PC-3 (cell line): ENCODE measurements at regions of chr11 and their contacts with region 1.

Region 1: GRCh38 chr11:66835768-66836405 is 7.4 kb upstream of the RCE1 start:
- DNase-seq: no peak
- ATAC-seq: no peak
- H3K4me3 ChIP-seq: no peak overlapping the region
- H3K27ac ChIP-seq: no peak overlapping the region
- H3K4me1 ChIP-seq: peaks cover 10% of the 10 kb centered on the region
- H3K27me3 ChIP-seq: no peaks in the 10 kb centered on the region
- CTCF ChIP-seq: no peak

Region 2: DNA sequence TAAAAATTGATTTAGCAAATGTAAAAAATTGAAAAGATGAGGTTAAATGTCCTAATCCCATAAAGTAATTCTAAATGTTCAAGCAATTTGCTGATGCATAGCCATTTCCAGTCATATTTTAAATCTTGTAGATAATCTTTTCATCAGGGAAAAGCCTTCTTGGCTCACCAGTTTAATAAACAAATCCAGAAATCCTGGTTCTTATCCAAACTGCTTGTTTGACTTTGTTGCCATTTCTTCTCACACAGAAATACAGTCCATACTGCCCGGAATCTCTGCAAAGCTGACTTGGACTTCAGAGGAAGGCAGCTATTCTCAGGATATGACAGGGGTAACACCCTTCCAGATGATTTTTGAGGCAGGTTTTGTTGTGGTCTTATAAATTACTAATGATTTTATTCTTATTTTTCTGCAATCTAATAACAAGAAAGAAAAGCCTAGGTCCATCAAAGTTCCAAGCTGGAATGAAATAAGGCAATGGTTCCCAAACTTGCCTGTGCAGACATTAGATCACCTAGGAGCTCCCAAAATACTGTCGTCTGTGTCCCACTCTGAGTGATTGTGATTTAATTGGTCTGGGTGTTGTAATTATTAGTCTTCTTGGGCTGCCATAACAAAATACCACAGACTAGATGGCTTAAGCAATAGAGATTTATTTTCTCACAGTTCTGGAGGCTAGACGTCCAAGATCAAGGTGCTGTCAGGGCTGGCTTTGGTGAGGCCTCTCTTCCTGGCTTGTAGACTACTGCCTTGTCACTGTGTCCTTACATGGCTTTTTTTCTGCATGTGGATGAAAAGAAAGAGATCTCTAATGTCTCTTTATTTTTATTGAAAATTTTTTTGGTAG is 47.8 kb before region 1 on chr11:
- CTCF ChIA-PET with region 1: no interaction called
- POLR2A ChIA-PET with region 1: no interaction called
- intact Hi-C with region 1: loop called (anchors 5 kb)
- DNase-seq: peak; percentile 14
- ATAC-seq: no peak
- H3K4me3 ChIP-seq: no peak overlapping the region
- H3K27ac ChIP-seq: peak overlapping the region; percentile 74
- H3K4me1 ChIP-seq: peaks cover 38% of the 10 kb centered on the region
- H3K27me3 ChIP-seq: no peaks in the 10 kb centered on the region
- CTCF ChIP-seq: no peak

Region 3: GRCh38 chr11:66815646-66816045 is 20.2 kb before region 1 on chr11:
- CTCF ChIA-PET with region 1: interaction called, 5 read pairs
- POLR2A ChIA-PET with region 1: no interaction called
- intact Hi-C with region 1: loop called (anchors 2 kb)
- DNase-seq: peak; percentile 93
- ATAC-seq: peak; percentile 91
- H3K4me3 ChIP-seq: peak overlapping the region; percentile 40; the same call in 1 of the 2 replicates
- H3K27ac ChIP-seq: peak overlapping the region; percentile 87
- H3K4me1 ChIP-seq: peaks cover 35% of the 10 kb centered on the region
- H3K27me3 ChIP-seq: no peaks in the 10 kb centered on the region
- CTCF ChIP-seq: no peak

Region 4: GRCh38 chr11:66894141-66894540 is 58.3 kb after region 1 on chr11:
- CTCF ChIA-PET with region 1: no interaction called
- POLR2A ChIA-PET with region 1: no interaction called
- intact Hi-C with region 1: no loop called
- DNase-seq: no peak
- ATAC-seq: no peak
- H3K4me3 ChIP-seq: no peak overlapping the region
- H3K27ac ChIP-seq: no peak overlapping the region
- H3K4me1 ChIP-seq: peaks cover 18% of the 10 kb centered on the region
- H3K27me3 ChIP-seq: no peaks in the 10 kb centered on the region
- CTCF ChIP-seq: no peak

Region 5: DNA sequence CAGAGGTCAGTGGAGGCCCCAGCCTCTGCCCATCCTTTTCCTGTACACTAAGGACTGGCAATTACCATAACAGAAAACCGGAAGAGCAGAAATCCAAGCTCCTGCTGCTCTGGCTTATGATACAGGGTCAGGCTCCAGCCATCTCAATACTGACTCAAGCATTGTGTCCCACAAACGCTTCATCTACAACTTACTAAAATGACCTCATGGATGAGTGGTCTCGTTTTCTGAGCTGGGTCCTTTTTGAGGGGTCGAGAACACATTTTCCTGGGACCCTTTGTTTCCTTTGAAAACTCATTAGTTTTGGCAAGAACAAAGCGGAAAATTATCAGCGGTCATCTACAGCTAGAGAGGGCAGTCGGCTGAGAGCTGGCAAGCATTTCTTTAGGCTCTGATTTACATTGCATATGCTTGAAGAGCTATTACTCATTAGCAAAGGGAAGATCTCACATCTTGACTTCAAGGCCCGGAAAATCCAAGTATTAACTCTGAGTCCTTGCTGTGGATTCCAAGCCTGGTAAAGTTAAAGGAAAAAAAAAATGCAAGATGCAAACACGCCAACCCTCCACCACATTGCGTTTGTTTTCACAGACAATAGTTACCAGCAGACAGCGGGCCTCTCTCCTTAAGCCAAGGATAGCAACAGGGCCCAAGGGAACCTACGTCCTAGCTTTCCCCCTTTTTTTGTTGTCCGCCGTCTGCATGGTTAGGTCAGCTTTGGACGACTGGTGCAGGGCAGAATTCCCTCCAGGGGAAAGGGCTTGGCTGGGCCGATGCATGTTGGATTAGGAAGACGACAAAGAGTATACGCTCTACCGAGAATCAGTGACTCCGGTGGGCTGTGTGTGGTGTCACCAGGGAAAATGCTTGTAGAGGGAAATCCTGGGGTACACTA is 1913.6 kb after region 1 on chr11:
- CTCF ChIA-PET with region 1: no interaction called
- POLR2A ChIA-PET with region 1: interaction called, 11 read pairs
- intact Hi-C with region 1: no loop called
- DNase-seq: no peak
- ATAC-seq: no peak
- H3K4me3 ChIP-seq: no peak overlapping the region
- H3K27ac ChIP-seq: no peak overlapping the region
- H3K4me1 ChIP-seq: peaks cover 15% of the 10 kb centered on the region
- H3K27me3 ChIP-seq: no peaks in the 10 kb centered on the region
- CTCF ChIP-seq: no peak